PC-3 (cell line): ENCODE measurements at regions of chr7 and their contacts with region 1.

Region 1: GRCh38 chr7:151244196-151244840 is 4.2 kb downstream of the SMARCD3 start:
- DNase-seq: peak; percentile 41
- ATAC-seq: no peak
- H3K4me3 ChIP-seq: no peak overlapping the region
- H3K27ac ChIP-seq: no peak overlapping the region
- H3K4me1 ChIP-seq: peaks cover 4% of the 10 kb centered on the region
- H3K27me3 ChIP-seq: no peaks in the 10 kb centered on the region
- CTCF ChIP-seq: peak; percentile 86

Region 2: DNA sequence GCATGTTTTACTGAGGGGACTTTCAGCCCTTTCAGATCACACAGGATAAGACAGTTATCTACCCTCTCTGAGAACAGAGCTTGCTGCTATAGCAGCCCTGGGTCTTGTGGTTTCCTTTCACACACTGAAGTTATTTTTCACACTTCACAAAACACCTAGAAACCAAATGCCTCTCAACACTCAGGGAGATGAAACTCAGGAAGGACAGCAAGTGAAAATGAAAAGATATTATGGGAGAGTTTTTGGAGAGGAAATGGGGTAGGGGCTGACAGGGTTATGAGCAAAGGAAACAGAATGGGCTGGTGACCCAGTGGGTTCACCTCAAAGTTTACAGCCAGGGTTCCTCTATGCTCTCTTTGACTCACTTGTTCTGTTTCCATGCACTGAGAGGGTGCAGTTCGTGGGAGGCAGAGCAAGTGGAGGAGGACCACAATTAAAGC is 575.8 kb before region 1 on chr7:
- CTCF ChIA-PET with region 1: no interaction called
- POLR2A ChIA-PET with region 1: no interaction called
- intact Hi-C with region 1: no loop called
- DNase-seq: no peak
- ATAC-seq: no peak
- H3K4me3 ChIP-seq: no peak overlapping the region
- H3K27ac ChIP-seq: no peak overlapping the region
- H3K4me1 ChIP-seq: no peaks in the 10 kb centered on the region
- H3K27me3 ChIP-seq: peaks cover 17% of the 10 kb centered on the region; the same call in 1 of the 2 replicates
- CTCF ChIP-seq: no peak

Region 3: GRCh38 chr7:151198945-151199848 is 45.1 kb before region 1 on chr7:
- CTCF ChIA-PET with region 1: no interaction called
- POLR2A ChIA-PET with region 1: no interaction called
- intact Hi-C with region 1: no loop called
- DNase-seq: no peak
- ATAC-seq: no peak
- H3K4me3 ChIP-seq: no peak overlapping the region
- H3K27ac ChIP-seq: no peak overlapping the region
- H3K4me1 ChIP-seq: no peaks in the 10 kb centered on the region
- H3K27me3 ChIP-seq: peaks cover 63% of the 10 kb centered on the region
- CTCF ChIP-seq: no peak

Region 4: DNA sequence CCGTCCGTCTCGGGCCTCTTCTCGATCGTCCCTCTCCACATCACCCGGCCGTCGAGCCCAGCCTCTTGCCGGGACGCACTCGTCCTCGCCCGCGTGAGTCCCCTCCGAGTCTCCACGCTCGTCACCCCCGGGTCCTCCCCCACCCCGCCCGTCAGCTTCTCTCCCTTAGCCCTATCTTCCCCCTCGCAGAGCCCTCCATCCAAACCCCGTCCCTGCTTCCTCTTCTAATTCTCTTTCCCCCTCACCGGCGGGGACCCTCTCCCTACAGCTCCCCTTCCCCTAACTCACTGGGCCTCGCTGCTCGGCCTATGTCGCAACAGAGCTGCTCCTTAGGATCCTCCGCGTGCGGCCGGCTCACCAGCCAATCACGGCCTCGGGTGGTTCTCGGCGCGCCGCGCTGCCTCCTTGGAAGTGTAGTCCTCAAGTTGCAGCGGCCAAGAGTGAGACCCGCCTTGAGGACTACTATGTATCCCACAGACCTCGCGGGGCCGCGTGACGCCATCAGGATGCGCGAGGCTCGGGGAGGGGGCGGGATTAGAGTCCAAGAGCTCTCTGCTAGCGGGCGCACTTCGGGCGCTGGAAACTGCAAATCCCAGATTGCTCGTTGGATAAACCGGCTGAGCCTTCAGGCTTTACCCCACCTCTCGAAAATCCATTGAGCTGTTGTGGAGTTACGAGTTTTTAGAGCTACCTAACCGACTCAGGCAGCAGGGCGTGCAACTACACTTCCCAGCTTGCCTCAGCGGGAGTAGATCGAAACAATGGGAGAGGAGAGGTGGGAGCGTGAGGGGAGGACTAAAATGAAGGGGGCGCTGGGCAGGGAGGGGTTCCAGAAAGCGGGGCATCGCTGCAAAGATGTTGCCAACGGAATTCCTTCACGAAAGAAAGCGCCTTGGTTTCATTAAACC is 17.2 kb before region 1 on chr7 and contains the start of gene ABCF2:
- CTCF ChIA-PET with region 1: interaction called, 10 read pairs
- POLR2A ChIA-PET with region 1: no interaction called
- intact Hi-C with region 1: no loop called
- DNase-seq: peak; percentile 98
- ATAC-seq: peak; percentile 98
- H3K4me3 ChIP-seq: peak within 1 kb of the TSS; percentile 92
- H3K27ac ChIP-seq: peak within 1 kb of the TSS; percentile 43
- H3K4me1 ChIP-seq: peaks cover 35% of the 10 kb centered on the region
- H3K27me3 ChIP-seq: no peaks in the 10 kb centered on the region
- CTCF ChIP-seq: no peak
- total RNA-seq, gene ABCF2: 55.5 and 75.0 TPM in 2 replicates